Heart left ventricle (tissue), 16 donors: ENCODE measurements at regions of chr2 and their contacts with region 1.

Region 1: DNA sequence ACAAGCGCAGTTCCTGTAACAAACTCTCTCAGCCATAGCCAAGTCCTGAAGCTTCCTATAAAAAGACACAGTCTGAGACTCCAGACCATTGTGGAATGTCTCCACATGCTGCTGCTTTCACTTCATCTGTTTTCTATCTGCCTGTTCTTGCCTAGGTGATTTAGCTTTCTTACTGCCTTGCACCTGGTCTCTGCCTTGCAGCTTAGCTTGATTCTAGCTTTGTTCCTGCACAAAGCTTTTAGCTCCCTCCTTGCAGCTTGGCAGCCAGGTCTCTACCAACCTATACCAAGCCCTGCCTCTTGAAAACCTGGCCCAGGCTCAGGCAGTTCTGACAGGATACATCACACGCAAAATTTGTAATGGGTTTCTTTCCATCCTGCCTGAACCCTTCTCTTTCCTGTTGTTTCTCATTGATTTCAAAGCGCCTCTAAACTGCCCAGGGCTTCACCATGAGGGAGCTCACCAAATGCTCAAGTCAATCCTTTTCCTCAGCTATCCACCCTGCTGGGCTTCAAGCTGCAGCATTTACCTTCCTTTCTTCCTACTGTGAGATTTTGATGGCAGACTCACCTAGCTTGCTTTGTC is 941.3 kb upstream of the NXPH2 start:
- DNase-seq: no peak
- ATAC-seq: no peak
- H3K4me3 ChIP-seq: no peak overlapping the region
- H3K27ac ChIP-seq: no peak overlapping the region
- H3K4me1 ChIP-seq: no peaks in the 10 kb centered on the region
- H3K27me3 ChIP-seq: no peaks in the 10 kb centered on the region
- CTCF ChIP-seq: no peak
- POLR2A ChIP-seq: no peak

Region 2: GRCh38 chr2:139669675-139670074 is 51.8 kb before region 1 on chr2:
- intact Hi-C with region 1: loop called in 1 of 10 experiments (anchors 10 kb)
- DNase-seq: no peak
- ATAC-seq: no peak
- H3K4me3 ChIP-seq: no peak overlapping the region
- H3K27ac ChIP-seq: no peak overlapping the region
- H3K4me1 ChIP-seq: no peaks in the 10 kb centered on the region
- H3K27me3 ChIP-seq: no peaks in the 10 kb centered on the region
- CTCF ChIP-seq: no peak
- POLR2A ChIP-seq: no peak

Region 3: GRCh38 chr2:140308706-140309105 is 587.2 kb after region 1 on chr2:
- intact Hi-C with region 1: loop called in 1 of 10 experiments (anchors 10 kb)
- DNase-seq: no peak
- ATAC-seq: no peak
- H3K4me3 ChIP-seq: no peak overlapping the region
- H3K27ac ChIP-seq: no peak overlapping the region
- H3K4me1 ChIP-seq: peaks cover 0 to 3% (median 0%) of the 10 kb centered on the region in 12 donors
- H3K27me3 ChIP-seq: no peaks in the 10 kb centered on the region
- CTCF ChIP-seq: no peak
- POLR2A ChIP-seq: no peak